Uterus (tissue), 4 donors: ENCODE measurements at regions of chr3 and their contacts with region 1.

Region 1: GRCh38 chr3:146222204-146223046 is 28.5 kb downstream of the PLSCR4 start:
- DNase-seq: no peak
- H3K4me3 ChIP-seq: no peak overlapping the region
- H3K27ac ChIP-seq: peak overlapping the region; percentile 27 to 53
- H3K4me1 ChIP-seq: peaks cover 0 to 6% of the 10 kb centered on the region in 2 donors
- H3K27me3 ChIP-seq: no peaks in the 10 kb centered on the region
- CTCF ChIP-seq: no peak
- POLR2A ChIP-seq: no peak

Region 2: DNA sequence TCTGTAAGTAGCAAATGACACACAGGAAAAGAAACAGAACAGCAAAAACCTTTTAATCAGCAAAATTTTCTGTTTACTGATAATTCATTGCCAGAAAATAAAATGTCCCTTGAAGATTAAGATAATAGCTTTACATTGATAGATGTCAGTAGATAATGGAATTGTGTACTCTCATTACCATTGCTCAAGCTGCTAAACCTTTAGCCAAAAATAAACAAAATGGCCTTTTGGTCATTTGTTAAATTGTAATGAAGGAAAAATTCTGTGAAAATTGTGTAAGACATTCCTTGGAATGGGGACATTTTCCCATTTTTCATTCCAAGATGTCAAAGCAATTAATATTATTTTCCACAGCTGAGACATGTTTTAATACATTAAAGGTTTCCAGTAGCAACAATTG is 251.2 kb before region 1 on chr3:
- intact Hi-C with region 1: no loop called
- DNase-seq: no peak
- H3K4me3 ChIP-seq: no peak overlapping the region
- H3K27ac ChIP-seq: no peak overlapping the region
- H3K4me1 ChIP-seq: no peaks in the 10 kb centered on the region
- H3K27me3 ChIP-seq: no peaks in the 10 kb centered on the region
- CTCF ChIP-seq: no peak
- POLR2A ChIP-seq: no peak

Region 3: GRCh38 chr3:146326670-146327543 is 104.5 kb after region 1 on chr3:
- intact Hi-C with region 1: loop called (anchors 10 kb)
- DNase-seq: peak; percentile 37 to 70
- H3K4me3 ChIP-seq: no peak overlapping the region
- H3K27ac ChIP-seq: no peak overlapping the region
- H3K4me1 ChIP-seq: no peaks in the 10 kb centered on the region
- H3K27me3 ChIP-seq: no peaks in the 10 kb centered on the region
- CTCF ChIP-seq: peak; percentile 59 to 82 (median 72)
- POLR2A ChIP-seq: no peak